Vagina (tissue), 2 donors: ENCODE measurements at regions of chr2 and their contacts with region 1.

Region 1: GRCh38 chr2:240991373-240992263 is 6.8 kb upstream of the SNED1 start:
- DNase-seq: peak in 1 of 2 donors; percentile 98
- H3K4me3 ChIP-seq: no peak overlapping the region
- H3K27ac ChIP-seq: peak overlapping the region; percentile 76
- H3K4me1 ChIP-seq: peaks cover 76% of the 10 kb centered on the region
- H3K27me3 ChIP-seq: no peaks in the 10 kb centered on the region
- CTCF ChIP-seq: no peak
- POLR2A ChIP-seq: no peak

Region 2: GRCh38 chr2:240851078-240851991 is 140.3 kb before region 1 on chr2:
- intact Hi-C with region 1: no loop called
- DNase-seq: no peak
- H3K4me3 ChIP-seq: no peak overlapping the region
- H3K27ac ChIP-seq: no peak overlapping the region
- H3K4me1 ChIP-seq: no peaks in the 10 kb centered on the region
- H3K27me3 ChIP-seq: no peaks in the 10 kb centered on the region
- CTCF ChIP-seq: peak; percentile 84 to 94 (median 92)
- POLR2A ChIP-seq: no peak

Region 3: DNA sequence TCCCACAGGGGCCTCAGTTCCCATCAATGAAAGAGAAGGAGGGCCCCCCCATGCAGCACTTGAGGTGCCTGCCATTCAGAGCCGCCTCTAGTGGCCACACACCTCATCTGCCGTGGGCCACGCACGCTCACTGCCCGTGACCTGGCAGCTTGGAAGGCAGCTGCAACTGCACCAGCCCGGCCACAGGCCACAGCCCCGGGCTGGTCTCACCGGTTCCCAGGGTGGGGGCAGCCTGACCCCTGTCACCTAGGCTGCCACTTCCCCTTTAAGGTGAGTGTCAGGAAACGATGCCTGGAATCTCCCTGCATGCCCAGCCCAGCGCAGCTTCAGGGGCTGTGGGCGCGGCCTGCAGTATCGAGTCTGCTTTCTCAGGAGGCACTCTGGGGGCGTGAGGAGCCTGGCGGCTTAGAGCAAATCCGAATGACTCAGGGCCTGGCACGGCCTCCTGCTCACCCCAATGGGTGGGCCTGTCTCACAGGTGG is 98.2 kb before region 1 on chr2:
- intact Hi-C with region 1: no loop called
- DNase-seq: no peak
- H3K4me3 ChIP-seq: peak overlapping the region in 1 of 2 donors; percentile 19
- H3K27ac ChIP-seq: no peak overlapping the region
- H3K4me1 ChIP-seq: peaks cover 36% of the 10 kb centered on the region
- H3K27me3 ChIP-seq: no peaks in the 10 kb centered on the region
- CTCF ChIP-seq: no peak
- POLR2A ChIP-seq: no peak

Region 4: GRCh38 chr2:240916571-240917008 is 75.0 kb before region 1 on chr2:
- intact Hi-C with region 1: loop called (anchors 5 kb)
- DNase-seq: no peak
- H3K4me3 ChIP-seq: peak overlapping the region in 1 of 2 donors; percentile 21
- H3K27ac ChIP-seq: peak overlapping the region; percentile 72
- H3K4me1 ChIP-seq: peaks cover 66% of the 10 kb centered on the region
- H3K27me3 ChIP-seq: no peaks in the 10 kb centered on the region
- CTCF ChIP-seq: no peak
- POLR2A ChIP-seq: no peak

Region 5: GRCh38 chr2:240960309-240960970 is 31.2 kb before region 1 on chr2:
- intact Hi-C with region 1: loop called (anchors 1 kb)
- DNase-seq: peak in 1 of 2 donors; percentile 86
- H3K4me3 ChIP-seq: no peak overlapping the region
- H3K27ac ChIP-seq: peak overlapping the region; percentile 80
- H3K4me1 ChIP-seq: peaks cover 59% of the 10 kb centered on the region
- H3K27me3 ChIP-seq: no peaks in the 10 kb centered on the region
- CTCF ChIP-seq: no peak
- POLR2A ChIP-seq: no peak

Region 6: DNA sequence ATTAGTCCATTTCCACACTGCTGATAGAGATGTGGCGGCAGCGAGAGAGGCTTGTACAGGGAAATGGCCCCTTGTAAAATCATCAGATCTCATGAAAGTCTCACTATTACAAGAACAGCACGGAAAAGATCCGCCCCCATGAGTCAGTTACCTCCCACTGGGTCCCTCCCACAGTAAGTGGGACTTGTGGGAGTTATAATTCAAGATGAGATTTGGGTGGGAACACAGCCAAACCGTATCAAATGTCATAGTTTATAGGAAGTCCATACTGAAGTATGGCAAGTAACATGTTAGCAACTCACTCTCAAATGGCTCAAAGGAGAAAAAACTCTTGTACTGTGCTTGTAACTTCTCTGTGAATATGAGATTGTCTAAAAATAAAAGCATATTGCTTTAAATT is 420.5 kb after region 1 on chr2:
- intact Hi-C with region 1: no loop called
- DNase-seq: no peak
- H3K4me3 ChIP-seq: no peak overlapping the region
- H3K27ac ChIP-seq: no peak overlapping the region
- H3K4me1 ChIP-seq: no peaks in the 10 kb centered on the region
- H3K27me3 ChIP-seq: no peaks in the 10 kb centered on the region
- CTCF ChIP-seq: no peak
- POLR2A ChIP-seq: no peak